Breast epithelium (tissue), 4 donors: ENCODE measurements at regions of chr1 and their contacts with region 1.

Region 1: GRCh38 chr1:10178597-10179405 is 31.6 kb upstream of the KIF1B start:
- DNase-seq: no peak
- H3K4me3 ChIP-seq: no peak overlapping the region
- H3K27ac ChIP-seq: no peak overlapping the region
- H3K4me1 ChIP-seq: no peaks in the 10 kb centered on the region
- H3K27me3 ChIP-seq: no peaks in the 10 kb centered on the region
- CTCF ChIP-seq: no peak
- POLR2A ChIP-seq: no peak

Region 2: GRCh38 chr1:8396786-8397406 is 1781.9 kb before region 1 on chr1:
- intact Hi-C with region 1: no loop called
- DNase-seq: no peak
- H3K4me3 ChIP-seq: no peak overlapping the region
- H3K27ac ChIP-seq: peak overlapping the region; percentile 45 to 71
- H3K4me1 ChIP-seq: peaks cover 3 to 12% of the 10 kb centered on the region in 2 donors
- H3K27me3 ChIP-seq: no peaks in the 10 kb centered on the region
- CTCF ChIP-seq: no peak
- POLR2A ChIP-seq: no peak

Region 3: DNA sequence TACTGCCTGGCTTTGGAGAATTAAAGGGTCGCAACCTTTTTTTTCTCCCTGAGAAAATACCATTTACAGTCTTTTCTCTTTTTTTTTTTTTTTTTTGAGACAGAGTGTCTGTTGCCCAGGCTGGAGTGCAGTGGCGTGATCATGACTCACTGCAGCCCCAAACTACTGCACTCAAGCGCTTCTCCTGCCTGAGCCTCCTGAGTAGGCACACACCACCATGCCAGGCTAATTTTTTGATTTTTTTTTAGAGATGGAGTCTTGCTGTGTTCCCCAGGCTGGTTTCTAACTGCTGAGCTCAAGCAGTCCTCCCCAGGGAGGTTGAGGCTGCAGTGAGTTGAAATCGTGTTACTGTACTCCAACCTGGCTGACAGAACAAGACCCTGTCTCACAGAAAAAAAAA is 121.5 kb before region 1 on chr1:
- intact Hi-C with region 1: loop called (anchors 5 kb)
- DNase-seq: no peak
- H3K4me3 ChIP-seq: no peak overlapping the region
- H3K27ac ChIP-seq: no peak overlapping the region
- H3K4me1 ChIP-seq: no peaks in the 10 kb centered on the region
- H3K27me3 ChIP-seq: no peaks in the 10 kb centered on the region
- CTCF ChIP-seq: no peak
- POLR2A ChIP-seq: no peak

Region 4: DNA sequence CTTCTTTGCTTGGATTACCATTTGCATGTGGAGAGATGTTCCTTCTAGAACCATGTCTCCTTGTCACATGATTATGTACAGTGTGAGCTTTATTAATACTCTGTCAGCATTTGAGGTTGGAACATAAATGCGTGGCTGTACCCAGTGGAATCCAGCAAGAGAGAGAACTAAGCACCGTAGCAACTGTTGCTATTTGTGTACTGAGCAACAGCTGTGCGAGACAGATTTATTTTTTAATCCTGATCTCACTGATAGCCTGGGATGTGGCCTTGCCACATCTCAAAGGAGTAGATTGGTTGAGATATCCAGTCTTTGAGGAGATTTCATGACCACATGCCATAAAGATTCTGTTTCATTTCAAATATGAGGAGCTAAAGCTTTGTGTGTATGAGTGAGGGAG is 75.0 kb after region 1 on chr1:
- intact Hi-C with region 1: no loop called
- DNase-seq: no peak
- H3K4me3 ChIP-seq: no peak overlapping the region
- H3K27ac ChIP-seq: peak overlapping the region in 1 of 2 donors; percentile 15
- H3K4me1 ChIP-seq: no peaks in the 10 kb centered on the region
- H3K27me3 ChIP-seq: no peaks in the 10 kb centered on the region
- CTCF ChIP-seq: no peak
- POLR2A ChIP-seq: no peak

Region 5: DNA sequence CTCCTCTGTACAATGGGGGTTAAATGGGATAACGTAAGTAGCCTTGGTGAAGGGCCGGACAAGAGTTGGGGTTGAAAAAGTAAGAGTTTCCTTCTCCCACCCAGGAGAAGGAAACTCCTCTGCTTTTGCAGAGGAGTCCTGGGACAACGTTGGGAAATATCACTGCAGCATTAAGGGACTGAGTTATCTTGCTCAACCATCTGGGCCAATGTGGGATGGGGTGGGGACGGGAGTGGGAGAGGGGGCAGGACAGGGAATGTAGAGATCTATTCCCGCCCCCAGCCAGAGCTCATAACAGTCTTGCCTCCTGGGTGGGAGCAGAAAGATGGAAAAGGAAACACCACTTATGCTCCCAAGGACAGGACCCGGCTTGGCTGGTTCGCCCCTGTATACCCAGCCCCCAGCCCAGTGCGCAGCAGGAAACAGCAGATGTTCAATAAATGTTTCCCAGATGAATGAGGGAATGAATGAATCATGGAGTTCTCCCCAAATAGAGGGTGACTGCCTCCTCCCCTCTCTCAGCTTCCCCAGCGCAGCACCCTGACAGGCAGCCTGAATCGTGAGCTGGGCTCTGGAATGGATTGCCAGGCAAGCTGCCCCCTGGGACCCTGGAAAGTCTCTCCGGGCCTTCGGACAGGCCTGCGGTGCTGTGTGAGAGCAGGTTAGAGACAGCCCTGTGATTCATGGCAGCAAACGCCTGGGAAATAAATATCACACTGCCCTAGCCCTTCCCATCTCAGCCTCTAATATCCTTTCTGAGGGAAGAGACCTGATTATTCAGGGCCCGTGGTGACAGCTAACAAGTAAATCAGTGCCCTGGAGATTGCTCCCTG is 1450.6 kb after region 1 on chr1:
- intact Hi-C with region 1: no loop called
- DNase-seq: no peak
- H3K4me3 ChIP-seq: no peak overlapping the region
- H3K27ac ChIP-seq: no peak overlapping the region
- H3K4me1 ChIP-seq: no peaks in the 10 kb centered on the region
- H3K27me3 ChIP-seq: peaks cover 0 to 23% of the 10 kb centered on the region in 2 donors
- CTCF ChIP-seq: no peak
- POLR2A ChIP-seq: no peak